ENCODE measurements at regions of chr12 and their contacts with region 1.

Region 1: DNA sequence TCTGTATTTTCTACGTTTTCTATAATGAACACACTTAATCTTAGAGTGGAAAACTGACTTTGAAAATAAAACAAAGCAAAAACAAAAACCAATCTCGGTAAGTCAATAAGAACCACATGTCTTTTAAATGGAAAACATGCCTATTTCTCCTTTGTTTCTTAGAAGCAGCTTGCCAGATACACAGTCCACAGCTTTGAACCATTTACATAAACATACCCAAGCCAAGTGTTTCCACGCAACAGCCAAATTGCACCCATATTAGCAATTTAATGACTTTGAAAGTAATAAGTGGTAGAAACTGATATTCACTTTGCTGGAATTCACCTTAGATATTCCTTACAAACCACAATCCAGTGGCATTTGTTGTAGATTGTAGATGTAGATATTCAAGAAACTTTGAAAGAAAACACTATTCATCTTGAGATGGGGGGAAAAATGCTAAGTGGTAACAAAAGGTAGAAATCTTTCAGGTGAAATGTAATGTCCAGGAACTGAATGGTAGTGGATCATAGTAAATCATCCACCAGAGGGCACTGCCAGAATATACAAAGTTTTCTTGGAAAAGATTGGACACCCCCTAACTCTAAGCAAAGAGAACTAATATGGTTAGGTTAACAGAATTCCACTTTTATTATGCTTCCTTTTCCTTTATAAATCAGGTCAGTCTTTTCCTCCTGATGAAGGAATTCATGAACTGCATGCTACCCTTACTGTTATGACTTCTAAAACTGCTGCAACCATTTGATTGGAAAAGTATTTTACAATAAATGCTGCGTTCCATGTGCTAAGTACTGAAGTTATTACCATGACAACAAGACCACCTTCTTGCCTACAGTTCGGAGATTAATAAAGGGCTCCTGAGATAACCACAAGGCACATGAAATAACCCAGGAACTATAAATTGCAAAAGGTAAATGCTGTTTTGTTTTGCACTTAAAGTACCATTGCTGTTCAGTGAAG is 69.8 kb downstream of the RERG start:
- H3K4me3 ChIP-seq: no peak overlapping the region
- H3K27ac ChIP-seq: no peak overlapping the region
- H3K4me1 ChIP-seq: peaks cover 5% of the 10 kb centered on the region; the same call in 1 of the 2 replicates
- CTCF ChIP-seq: no peak

Region 2: DNA sequence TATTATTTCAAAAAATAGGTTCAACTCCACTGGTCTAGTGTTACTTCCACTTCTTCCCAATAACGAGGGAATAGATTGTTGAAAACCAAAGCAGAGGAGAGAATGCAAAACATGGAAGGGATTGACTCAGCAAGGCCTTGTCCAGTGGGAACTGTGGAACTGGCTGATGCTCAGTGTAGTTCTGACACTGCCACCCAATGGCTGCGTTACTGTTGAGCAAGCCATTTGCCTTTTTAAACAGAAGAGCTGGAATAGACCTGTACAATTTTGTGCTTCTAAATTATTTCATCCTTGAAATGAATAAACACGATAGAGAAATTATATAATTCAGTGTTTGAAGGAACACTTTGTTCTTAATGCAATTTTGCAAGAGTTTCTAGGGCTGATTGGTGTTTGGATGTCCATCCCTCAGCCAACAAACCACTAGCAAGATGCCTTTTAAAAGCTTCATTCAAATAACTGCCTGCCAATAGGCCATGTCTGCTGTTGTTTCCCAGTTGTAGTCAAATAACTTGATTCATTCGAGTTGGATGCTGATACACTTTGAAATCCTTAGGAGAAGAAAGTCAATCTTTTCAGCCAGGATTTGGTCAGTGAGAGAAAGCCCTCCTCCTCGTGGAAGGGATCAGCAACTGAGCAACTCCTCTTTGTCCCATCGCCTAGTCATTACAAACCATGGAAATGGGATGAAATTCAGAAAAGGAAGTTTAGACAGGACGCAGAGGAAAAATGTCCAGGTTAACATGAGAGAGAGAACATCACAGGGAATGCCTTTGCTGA is 258.5 kb before region 1 on chr12:
- CTCF ChIA-PET with region 1: no interaction called
- POLR2A ChIA-PET with region 1: no interaction called
- H3K4me3 ChIP-seq: no peak overlapping the region
- H3K27ac ChIP-seq: no peak overlapping the region
- H3K4me1 ChIP-seq: no peaks in the 10 kb centered on the region
- CTCF ChIP-seq: no peak

Region 3: DNA sequence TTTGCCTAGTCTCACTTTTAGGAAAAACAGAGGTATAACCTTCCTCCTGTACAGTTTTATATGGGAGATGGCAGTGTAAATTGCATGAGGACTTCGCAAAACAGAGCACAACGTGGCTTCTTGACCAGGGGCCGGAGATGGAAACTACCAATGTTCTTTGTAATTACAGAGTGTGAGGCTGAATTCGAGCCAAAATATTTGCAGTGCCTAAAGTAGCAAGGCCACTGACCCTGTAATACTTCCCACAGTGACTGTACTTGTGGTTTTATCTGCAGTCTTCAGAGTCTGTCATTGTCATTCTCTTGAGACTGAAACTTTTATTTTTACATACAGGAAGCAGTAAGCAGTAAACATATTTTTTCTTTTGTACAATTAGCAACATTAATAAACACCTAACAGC is 29.1 kb before region 1 on chr12:
- CTCF ChIA-PET with region 1: no interaction called
- POLR2A ChIA-PET with region 1: no interaction called
- H3K4me3 ChIP-seq: no peak overlapping the region
- H3K27ac ChIP-seq: no peak overlapping the region
- H3K4me1 ChIP-seq: no peaks in the 10 kb centered on the region
- CTCF ChIP-seq: no peak

Region 4: GRCh38 chr12:15268927-15269552 is 117.6 kb after region 1 on chr12:
- CTCF ChIA-PET with region 1: interaction called, 10 read pairs
- POLR2A ChIA-PET with region 1: no interaction called
- H3K4me3 ChIP-seq: no peak overlapping the region
- H3K27ac ChIP-seq: no peak overlapping the region
- H3K4me1 ChIP-seq: no peaks in the 10 kb centered on the region
- CTCF ChIP-seq: peak; percentile 64